AG04449 (cell line): ENCODE measurements at regions of chr21 and their contacts with region 1.

Region 1: GRCh38 chr21:35217504-35218060 is 168.5 kb upstream of the RUNX1 start:
- DNase-seq: peak; percentile 64
- H3K4me3 ChIP-seq: no peak overlapping the region
- CTCF ChIP-seq: no peak

Region 2: DNA sequence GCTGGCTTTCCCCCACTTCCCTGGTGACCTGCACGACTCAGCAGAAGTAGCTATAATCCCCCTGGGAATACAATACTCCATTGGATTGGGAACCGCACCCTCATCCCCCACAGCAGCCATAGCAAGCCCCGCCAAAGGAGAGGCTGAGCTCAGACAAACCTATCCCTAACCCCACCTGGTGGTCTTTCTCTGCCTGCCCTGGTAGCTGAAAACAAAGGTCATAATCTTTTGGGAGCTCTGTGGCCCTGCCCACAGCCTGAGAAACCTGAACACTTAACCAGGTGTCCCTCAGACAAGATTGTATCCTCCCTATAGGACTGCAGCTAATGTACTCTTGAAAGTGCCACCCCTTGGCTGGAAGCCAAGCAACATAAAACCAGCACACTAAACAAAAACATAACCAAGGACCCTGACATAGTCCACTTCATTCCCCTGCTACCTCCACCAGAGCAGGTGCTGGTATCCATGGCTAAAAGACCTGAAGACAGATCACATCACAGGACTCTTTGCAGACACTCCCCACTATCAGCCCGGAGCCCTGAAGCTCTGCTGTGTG is 96.9 kb before region 1 on chr21:
- CTCF ChIA-PET with region 1: no interaction called
- POLR2A ChIA-PET with region 1: no interaction called
- DNase-seq: no peak
- H3K4me3 ChIP-seq: no peak overlapping the region
- CTCF ChIP-seq: no peak

Region 3: GRCh38 chr21:35204850-35205541 is 12.6 kb before region 1 on chr21:
- CTCF ChIA-PET with region 1: interaction called, 11 read pairs
- POLR2A ChIA-PET with region 1: no interaction called
- DNase-seq: peak; percentile 56
- H3K4me3 ChIP-seq: no peak overlapping the region
- CTCF ChIP-seq: no peak

Region 4: DNA sequence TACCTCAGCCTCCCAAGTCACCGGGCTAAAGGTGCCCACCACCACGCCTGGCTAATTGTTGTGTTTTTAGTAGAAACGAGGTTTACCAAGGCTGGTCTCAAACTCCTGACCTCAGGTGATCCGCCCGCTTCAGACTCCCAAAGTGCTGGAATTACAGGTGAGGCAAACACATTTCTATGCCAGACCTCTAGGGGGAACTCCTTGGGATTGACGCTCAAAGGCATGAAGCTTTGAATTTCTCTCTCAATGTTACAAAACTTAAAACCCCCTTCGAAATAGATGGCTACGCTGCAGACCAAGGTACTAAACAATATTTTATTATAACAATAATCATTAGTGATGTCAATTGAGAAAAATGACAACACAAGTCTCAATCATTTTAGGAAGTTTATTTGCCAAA is 512.7 kb after region 1 on chr21:
- CTCF ChIA-PET with region 1: no interaction called
- POLR2A ChIA-PET with region 1: no interaction called
- DNase-seq: no peak
- H3K4me3 ChIP-seq: no peak overlapping the region
- CTCF ChIP-seq: no peak